PC-9 (cell line): ENCODE measurements at regions of chr3 and their contacts with region 1.

Region 1: DNA sequence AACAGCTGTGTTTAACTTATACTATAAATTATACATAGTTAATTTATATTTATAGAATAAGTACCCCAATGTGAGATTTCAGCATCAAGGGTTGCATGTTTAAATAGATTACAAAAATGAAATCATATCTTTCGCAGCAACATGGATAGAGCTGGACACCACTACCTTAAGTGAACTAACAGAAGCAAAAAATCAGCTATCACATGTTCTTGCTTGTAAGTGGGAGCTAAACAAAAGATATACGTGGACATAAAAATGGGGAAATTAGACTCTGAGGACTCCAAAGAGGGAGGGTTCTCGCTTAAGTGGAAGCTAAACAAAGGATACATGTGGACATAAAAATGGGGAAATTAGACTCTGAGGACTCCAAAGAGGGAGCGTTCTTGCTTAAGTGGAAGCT is 626.5 kb upstream of the DPPA4 start:
- DNase-seq: no peak
- H3K4me3 ChIP-seq: no peak overlapping the region
- H3K27ac ChIP-seq: no peak overlapping the region
- H3K4me1 ChIP-seq: no peaks in the 10 kb centered on the region
- H3K27me3 ChIP-seq: no peaks in the 10 kb centered on the region
- CTCF ChIP-seq: no peak

Region 2: GRCh38 chr3:109213321-109213720 is 750.5 kb before region 1 on chr3:
- CTCF ChIA-PET with region 1: no interaction called
- POLR2A ChIA-PET with region 1: no interaction called
- intact Hi-C with region 1: no loop called
- DNase-seq: no peak
- H3K4me3 ChIP-seq: no peak overlapping the region
- H3K27ac ChIP-seq: no peak overlapping the region
- H3K4me1 ChIP-seq: no peaks in the 10 kb centered on the region
- H3K27me3 ChIP-seq: no peaks in the 10 kb centered on the region
- CTCF ChIP-seq: no peak

Region 3: GRCh38 chr3:109994853-109995252 is 31.0 kb after region 1 on chr3:
- CTCF ChIA-PET with region 1: no interaction called
- POLR2A ChIA-PET with region 1: no interaction called
- intact Hi-C with region 1: no loop called
- DNase-seq: no peak
- H3K4me3 ChIP-seq: no peak overlapping the region
- H3K27ac ChIP-seq: no peak overlapping the region
- H3K4me1 ChIP-seq: no peaks in the 10 kb centered on the region
- H3K27me3 ChIP-seq: no peaks in the 10 kb centered on the region
- CTCF ChIP-seq: no peak

Region 4: DNA sequence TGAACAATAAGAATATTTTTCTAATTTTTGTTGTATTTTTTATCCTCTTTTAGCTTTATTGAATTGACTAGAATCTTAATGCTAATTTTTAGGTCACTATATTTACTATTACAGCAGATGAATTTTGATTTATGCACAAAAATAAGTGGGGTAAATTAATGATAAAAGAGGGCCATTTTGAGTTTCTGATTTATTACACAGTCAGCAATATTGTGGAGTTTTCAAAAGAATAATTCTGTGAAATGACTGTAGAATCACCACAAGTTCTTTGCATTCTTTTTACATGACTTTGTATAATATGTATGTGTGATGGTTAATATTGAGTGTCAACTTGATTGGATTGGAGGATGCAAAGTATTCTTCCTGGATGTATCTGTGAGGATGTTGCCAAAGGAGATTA is 185.9 kb after region 1 on chr3:
- CTCF ChIA-PET with region 1: no interaction called
- POLR2A ChIA-PET with region 1: interaction called, 10 read pairs
- intact Hi-C with region 1: no loop called
- DNase-seq: no peak
- H3K4me3 ChIP-seq: no peak overlapping the region
- H3K27ac ChIP-seq: no peak overlapping the region
- H3K4me1 ChIP-seq: no peaks in the 10 kb centered on the region
- H3K27me3 ChIP-seq: no peaks in the 10 kb centered on the region
- CTCF ChIP-seq: no peak